ENCODE measurements at regions of chr1 and their contacts with region 1.

Region 1: DNA sequence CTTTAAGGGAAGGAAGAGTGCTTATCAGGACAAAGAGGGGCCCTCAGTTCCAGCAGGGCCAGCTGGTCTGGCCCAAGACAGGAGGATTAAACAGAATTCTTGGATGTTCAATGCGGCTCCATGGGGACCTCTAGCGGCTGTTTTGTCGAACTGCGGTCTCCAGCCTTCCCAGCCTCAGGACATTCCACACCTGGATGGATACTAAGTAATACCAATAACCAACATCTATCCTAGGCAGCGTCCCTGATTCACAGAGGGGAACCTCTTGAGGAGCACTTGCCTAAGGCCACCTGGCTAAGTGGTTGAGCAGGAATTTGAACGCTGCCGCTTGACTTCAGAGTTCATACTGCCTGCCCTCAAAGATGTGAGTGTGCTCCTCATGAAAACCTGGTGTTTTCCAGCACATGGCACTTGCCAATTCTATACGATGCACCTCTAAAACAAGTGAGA is 15.5 kb upstream of the CD247 start:
- DNase-seq: peak; percentile 36
- ATAC-seq: peak; percentile 78
- H3K4me3 Mint-ChIP-seq: no peak overlapping the region
- H3K27ac Mint-ChIP-seq: no peak overlapping the region
- H3K4me1 Mint-ChIP-seq: peaks cover 4% of the 10 kb centered on the region
- H3K27me3 Mint-ChIP-seq: no peaks in the 10 kb centered on the region
- CTCF ChIP-seq: no peak

Region 2: GRCh38 chr1:167447521-167448136 is 86.2 kb before region 1 on chr1:
- CTCF ChIA-PET with region 1: interaction called, 38 read pairs
- POLR2A ChIA-PET with region 1: no interaction called
- intact Hi-C with region 1: loop called (anchors 1 kb)
- DNase-seq: no peak
- ATAC-seq: peak; percentile 94
- H3K4me3 Mint-ChIP-seq: peak overlapping the region; percentile 61
- H3K27ac Mint-ChIP-seq: peak overlapping the region; percentile 70
- H3K4me1 Mint-ChIP-seq: peaks cover 25% of the 10 kb centered on the region
- H3K27me3 Mint-ChIP-seq: no peaks in the 10 kb centered on the region
- CTCF ChIP-seq: no peak

Region 3: DNA sequence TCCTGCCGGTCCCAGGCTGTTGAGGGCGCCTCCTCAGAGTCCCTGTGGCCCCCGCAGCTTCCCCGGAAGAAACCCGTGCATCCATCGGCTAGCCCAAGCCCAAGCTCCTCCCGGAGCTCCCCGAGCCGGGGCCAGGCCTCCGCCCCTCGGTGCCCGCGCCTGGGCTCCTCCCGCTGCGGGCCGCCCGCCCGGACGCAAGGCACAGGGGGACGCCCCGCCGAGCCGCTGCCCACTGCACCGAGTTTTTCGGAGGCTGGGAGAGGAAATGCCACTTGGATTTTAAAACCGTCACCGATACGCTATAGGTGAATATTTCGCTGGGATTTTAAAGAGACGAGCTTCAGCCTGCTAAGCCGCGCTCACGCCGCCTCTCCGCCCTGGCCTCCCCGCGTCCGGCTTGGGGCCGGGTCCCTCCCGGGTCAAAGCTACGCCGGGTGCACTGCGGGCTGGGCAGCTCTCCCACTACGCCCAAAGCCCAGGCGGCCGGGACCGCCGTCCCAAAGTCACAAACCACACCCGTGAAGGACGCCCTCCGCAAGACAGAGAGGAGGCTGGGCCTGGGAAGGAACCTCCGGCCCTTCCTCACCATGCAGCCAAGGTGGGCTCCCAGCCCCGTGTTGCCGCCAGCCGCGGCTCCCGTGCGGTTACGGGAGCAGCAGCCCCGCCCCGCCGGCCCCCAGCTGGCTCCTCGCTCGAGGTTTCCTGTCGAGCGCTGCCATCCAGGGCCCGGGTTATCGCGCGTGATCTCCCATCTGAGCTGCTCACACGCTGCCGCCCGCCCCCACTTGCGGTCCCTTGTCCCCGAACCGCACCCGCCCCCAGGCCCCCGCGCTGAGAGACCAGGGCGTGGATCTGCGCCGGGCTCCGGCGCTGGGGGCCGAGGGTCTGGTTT is 78.7 kb before region 1 on chr1:
- CTCF ChIA-PET with region 1: interaction called, 23 read pairs
- POLR2A ChIA-PET with region 1: interaction called, 6 read pairs
- intact Hi-C with region 1: loop called (anchors 5 kb)
- DNase-seq: peak; percentile 60
- ATAC-seq: peak; percentile 76
- H3K4me3 Mint-ChIP-seq: peak overlapping the region; percentile 78
- H3K27ac Mint-ChIP-seq: no peak overlapping the region
- H3K4me1 Mint-ChIP-seq: peaks cover 18% of the 10 kb centered on the region
- H3K27me3 Mint-ChIP-seq: peaks cover 4% of the 10 kb centered on the region
- CTCF ChIP-seq: no peak

Region 4: GRCh38 chr1:167722152-167722869 is 188.4 kb after region 1 on chr1:
- CTCF ChIA-PET with region 1: no interaction called
- POLR2A ChIA-PET with region 1: no interaction called
- intact Hi-C with region 1: no loop called
- DNase-seq: no peak
- ATAC-seq: peak; percentile 17
- H3K4me3 Mint-ChIP-seq: peak overlapping the region; percentile 94
- H3K27ac Mint-ChIP-seq: peak overlapping the region; percentile 55
- H3K4me1 Mint-ChIP-seq: peaks cover 71% of the 10 kb centered on the region
- H3K27me3 Mint-ChIP-seq: no peaks in the 10 kb centered on the region
- CTCF ChIP-seq: no peak

Measured in activated B cell treated with CpG ODN at 0.5 μM for 24 hours (primary cell).